Activated T-helper 1 cell treated with anti-CD3 and anti-CD28 coated beads, Interleukin-12 subunit alpha, Interleukin-12 subunit beta, Interleukin-2, Interleukin-4 antibody, amounts not matched to agents 30 ng/mL and 10 ng/mL and 1 ng/mL, durations not matched to agents 14 hours and 24 hours and 36 hours (primary cell): ENCODE measurements at regions of chr20 and their contacts with region 1.

Region 1: GRCh38 chr20:35718972-35719635 is 19.9 kb downstream of the ROMO1 start:
- DNase-seq: no peak
- H3K4me3 Mint-ChIP-seq: no peak overlapping the region
- H3K27ac Mint-ChIP-seq: no peak overlapping the region
- H3K4me1 Mint-ChIP-seq: peaks cover 27% of the 10 kb centered on the region
- H3K27me3 Mint-ChIP-seq: no peaks in the 10 kb centered on the region

Region 2: GRCh38 chr20:35551503-35551902 is 167.6 kb before region 1 on chr20:
- intact Hi-C with region 1: no loop called
- DNase-seq: no peak
- H3K4me3 Mint-ChIP-seq: no peak overlapping the region
- H3K27ac Mint-ChIP-seq: no peak overlapping the region
- H3K4me1 Mint-ChIP-seq: no peaks in the 10 kb centered on the region
- H3K27me3 Mint-ChIP-seq: no peaks in the 10 kb centered on the region

Region 3: DNA sequence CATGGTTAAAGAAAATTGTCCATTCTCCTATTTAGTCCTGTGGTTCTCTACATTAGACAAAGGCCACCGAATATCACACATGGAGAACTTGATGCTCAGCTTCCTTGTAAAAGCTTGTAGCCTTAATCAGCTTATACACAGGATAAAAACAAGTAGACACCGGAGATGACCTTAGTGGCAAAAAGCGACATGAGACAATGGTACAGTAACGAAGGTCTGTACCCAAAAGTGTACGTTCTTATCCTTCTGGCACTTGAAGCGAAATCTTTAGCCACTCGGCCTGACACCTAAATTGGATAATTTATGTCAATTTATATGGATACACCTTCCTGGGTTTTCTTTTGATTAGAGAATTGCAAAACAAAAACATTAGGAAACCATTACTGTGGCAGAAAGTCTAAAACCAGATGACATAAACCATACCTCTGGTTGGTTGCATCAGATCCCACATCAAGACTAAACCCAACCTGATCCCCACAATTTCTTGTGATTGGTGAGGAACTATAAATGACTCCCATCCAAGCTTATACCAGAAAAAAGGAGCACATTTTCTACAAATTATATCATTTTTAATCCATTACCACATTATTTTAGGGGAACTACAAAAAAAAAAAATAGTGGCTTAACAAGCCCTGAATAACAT is 16.8 kb after region 1 on chr20:
- intact Hi-C with region 1: loop called (anchors 2 kb)
- DNase-seq: no peak
- H3K4me3 Mint-ChIP-seq: peak overlapping the region; percentile 63
- H3K27ac Mint-ChIP-seq: no peak overlapping the region
- H3K4me1 Mint-ChIP-seq: peaks cover 58% of the 10 kb centered on the region
- H3K27me3 Mint-ChIP-seq: no peaks in the 10 kb centered on the region